PC-3 (cell line): ENCODE measurements at regions of chr17 and their contacts with region 1.

Region 1: GRCh38 chr17:9575381-9576101 is at the start of gene STX8:
- DNase-seq: peak; percentile 74
- ATAC-seq: peak; percentile 92
- H3K4me3 ChIP-seq: peak within 1 kb of the TSS; percentile 85
- H3K27ac ChIP-seq: no peak within 1 kb of the TSS
- H3K4me1 ChIP-seq: 0 out of 2 replicates have a peak, but pooled peaks cover 6% of the 10 kb centered on the region
- H3K27me3 ChIP-seq: no peaks in the 10 kb centered on the region
- CTCF ChIP-seq: no peak
- total RNA-seq, gene STX8: 33.6 and 57.4 TPM in 2 replicates

Region 2: DNA sequence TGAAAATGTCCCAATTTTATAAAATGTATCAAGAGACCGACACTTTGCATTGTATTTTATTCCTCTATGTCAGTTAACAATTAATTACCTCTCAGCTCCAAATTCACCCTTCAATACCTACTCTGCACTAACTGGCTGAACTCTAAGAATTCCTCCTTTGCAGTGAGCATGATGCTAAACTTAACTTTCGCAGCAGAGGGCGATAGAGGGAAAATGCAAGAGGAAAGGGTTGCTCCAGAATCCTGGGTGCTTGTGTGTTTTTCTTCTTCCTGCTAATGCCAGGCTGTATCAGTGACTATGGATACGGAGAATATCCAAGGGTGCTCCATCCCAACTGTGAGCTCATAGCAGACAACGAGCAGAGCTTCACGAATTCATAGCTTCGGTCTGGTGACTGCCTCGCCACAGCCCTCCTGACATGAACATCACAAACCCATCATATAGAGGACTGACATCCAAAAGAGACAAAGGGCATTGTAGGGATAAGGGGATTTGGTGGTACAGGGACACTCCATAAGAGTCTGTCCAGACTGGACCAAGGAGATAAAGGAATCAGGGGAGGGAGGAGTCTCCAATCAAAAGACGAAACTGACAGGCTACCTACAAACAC is 172.8 kb before region 1 on chr17:
- CTCF ChIA-PET with region 1: no interaction called
- POLR2A ChIA-PET with region 1: no interaction called
- intact Hi-C with region 1: no loop called
- DNase-seq: peak; percentile 55
- ATAC-seq: peak; percentile 49
- H3K4me3 ChIP-seq: no peak overlapping the region
- H3K27ac ChIP-seq: no peak overlapping the region
- H3K4me1 ChIP-seq: no peaks in the 10 kb centered on the region
- H3K27me3 ChIP-seq: no peaks in the 10 kb centered on the region
- CTCF ChIP-seq: peak; percentile 66

Region 3: DNA sequence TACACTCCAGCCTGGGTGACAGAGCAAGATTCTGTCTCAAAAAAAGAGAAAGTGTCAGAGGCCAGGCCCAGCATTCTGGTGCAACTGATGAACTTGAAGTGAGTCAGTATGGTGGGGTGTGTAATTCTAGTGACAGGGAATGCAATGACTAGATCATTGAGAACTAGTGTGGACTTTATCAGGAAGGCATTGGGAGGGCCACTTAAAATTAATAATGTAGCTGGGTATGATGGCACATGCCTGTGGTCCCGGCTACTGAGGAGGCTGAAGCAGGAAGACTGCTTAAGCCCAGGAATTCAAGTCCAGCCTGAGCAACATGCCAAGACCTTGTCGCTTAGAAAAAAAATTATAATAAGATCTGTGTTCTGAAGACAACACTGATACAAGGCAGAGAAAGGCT is 90.8 kb before region 1 on chr17:
- CTCF ChIA-PET with region 1: no interaction called
- POLR2A ChIA-PET with region 1: no interaction called
- intact Hi-C with region 1: no loop called
- DNase-seq: no peak
- ATAC-seq: no peak
- H3K4me3 ChIP-seq: no peak overlapping the region
- H3K27ac ChIP-seq: no peak overlapping the region
- H3K4me1 ChIP-seq: no peaks in the 10 kb centered on the region
- H3K27me3 ChIP-seq: no peaks in the 10 kb centered on the region
- CTCF ChIP-seq: no peak

Region 4: DNA sequence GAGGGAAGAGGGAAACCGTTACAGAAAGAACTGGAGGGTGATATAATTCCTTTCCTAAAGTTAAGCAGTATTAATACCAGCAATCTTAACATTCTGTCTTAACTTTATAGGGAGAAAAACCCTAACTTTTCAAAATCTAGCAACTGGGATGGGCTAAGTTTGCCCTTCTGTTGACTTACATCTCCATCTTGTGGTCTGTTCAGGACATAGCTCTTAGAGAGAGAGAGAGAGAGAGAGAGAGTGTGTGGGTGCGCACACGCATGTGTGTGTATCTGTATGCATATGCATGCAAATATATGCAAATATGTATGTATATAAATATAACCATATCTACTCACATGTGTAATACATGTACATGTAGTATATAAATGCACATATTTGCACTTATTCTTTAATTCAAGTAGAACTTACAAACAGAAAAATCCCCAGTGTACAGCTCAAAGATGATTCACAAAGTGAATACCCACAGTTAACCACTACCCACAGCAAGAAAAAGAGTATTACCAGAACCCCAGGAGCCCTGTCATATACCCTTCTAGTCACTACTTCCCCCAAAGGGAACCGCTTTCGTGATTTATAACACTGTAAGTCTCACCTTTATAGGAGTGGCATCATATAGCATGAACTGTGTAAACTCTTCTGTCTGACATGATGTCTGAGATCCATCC is 46.4 kb before region 1 on chr17:
- CTCF ChIA-PET with region 1: no interaction called
- POLR2A ChIA-PET with region 1: no interaction called
- intact Hi-C with region 1: no loop called
- DNase-seq: peak; percentile 27
- ATAC-seq: no peak
- H3K4me3 ChIP-seq: no peak overlapping the region
- H3K27ac ChIP-seq: no peak overlapping the region
- H3K4me1 ChIP-seq: no peaks in the 10 kb centered on the region
- H3K27me3 ChIP-seq: no peaks in the 10 kb centered on the region
- CTCF ChIP-seq: peak; percentile 62

Region 5: DNA sequence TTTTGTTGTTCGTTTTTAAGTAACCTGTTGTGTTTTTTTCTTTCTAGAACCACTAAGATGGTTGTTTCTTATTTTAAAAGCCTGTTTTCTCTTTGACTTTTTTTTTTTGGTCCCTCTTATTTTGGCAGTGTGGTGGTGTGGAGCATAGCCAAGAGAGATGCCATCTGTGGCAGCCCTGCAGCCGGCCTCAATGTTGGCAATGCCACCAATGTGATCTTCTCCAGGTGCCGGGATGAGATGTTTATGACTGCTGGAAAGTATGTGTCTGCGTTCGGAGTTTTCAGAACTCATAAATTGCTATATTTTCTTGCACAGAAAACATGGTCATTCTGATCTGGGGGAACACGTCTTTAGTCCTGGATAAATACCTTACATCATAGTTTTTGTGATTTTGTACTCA is 18.5 kb after region 1 on chr17:
- CTCF ChIA-PET with region 1: interaction called, 13 read pairs
- POLR2A ChIA-PET with region 1: interaction called, 6 read pairs
- intact Hi-C with region 1: no loop called
- DNase-seq: no peak
- ATAC-seq: no peak
- H3K4me3 ChIP-seq: no peak overlapping the region
- H3K27ac ChIP-seq: no peak overlapping the region
- H3K4me1 ChIP-seq: no peaks in the 10 kb centered on the region
- H3K27me3 ChIP-seq: no peaks in the 10 kb centered on the region
- CTCF ChIP-seq: no peak

Region 6: DNA sequence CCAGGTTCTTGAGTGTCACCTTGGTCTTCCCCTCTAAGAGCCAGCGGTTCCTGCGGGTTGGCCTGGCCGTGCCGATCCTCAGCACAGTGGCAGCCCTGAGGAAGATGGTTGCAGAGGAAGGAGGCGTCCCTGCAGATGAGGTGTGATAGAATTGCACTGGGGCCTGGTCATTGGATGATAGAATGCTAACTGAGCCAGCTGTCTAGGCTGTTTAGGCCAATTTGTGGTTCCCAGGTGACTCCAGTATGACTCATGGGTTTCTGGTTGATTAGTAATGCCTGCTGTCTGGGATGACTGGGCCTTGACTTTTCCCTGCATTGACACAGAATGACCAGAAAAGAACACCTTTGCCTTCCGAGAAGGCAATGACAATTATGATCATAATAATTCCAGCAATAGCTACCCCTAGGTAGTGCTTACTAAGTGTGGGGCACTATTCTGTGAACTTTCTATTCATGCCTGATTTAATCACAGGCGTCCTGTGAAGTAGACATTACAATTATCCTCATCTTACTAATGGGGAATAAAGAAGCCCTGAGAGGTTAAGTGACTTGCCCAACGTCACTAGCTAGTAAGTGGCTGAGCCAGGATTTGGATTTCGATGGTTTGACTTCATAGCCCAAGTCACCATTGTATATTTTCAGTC is 101.3 kb after region 1 on chr17:
- CTCF ChIA-PET with region 1: no interaction called
- POLR2A ChIA-PET with region 1: no interaction called
- intact Hi-C with region 1: loop called (anchors 1 kb)
- DNase-seq: peak; percentile 94
- ATAC-seq: peak; percentile 96
- H3K4me3 ChIP-seq: peak overlapping the region; percentile 26; the same call in 1 of the 2 replicates
- H3K27ac ChIP-seq: peak overlapping the region; percentile 94
- H3K4me1 ChIP-seq: peaks cover 19% of the 10 kb centered on the region
- H3K27me3 ChIP-seq: no peaks in the 10 kb centered on the region
- CTCF ChIP-seq: no peak

Region 7: DNA sequence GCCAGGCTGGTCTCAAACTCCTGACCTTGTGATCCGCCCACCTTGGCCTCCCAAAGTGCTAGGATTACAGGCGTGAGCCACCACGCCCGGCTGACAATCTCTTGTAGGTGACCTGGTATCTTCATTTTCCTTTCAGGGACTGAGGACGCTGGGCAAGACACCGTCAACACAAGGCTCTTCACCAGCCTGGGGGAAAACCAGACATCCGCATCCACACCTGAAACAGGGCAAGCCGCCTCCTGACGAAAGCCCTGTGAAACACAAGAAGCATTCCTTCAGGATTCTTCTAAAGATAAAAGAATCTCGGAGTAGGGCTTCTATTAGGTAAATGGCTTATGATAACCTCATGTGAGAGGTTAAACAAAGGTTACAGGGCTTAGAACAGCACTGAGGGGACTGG is 167.6 kb after region 1 on chr17:
- CTCF ChIA-PET with region 1: no interaction called
- POLR2A ChIA-PET with region 1: no interaction called
- intact Hi-C with region 1: loop called (anchors 10 kb)
- DNase-seq: no peak
- ATAC-seq: no peak
- H3K4me3 ChIP-seq: no peak overlapping the region
- H3K27ac ChIP-seq: no peak overlapping the region
- H3K4me1 ChIP-seq: no peaks in the 10 kb centered on the region
- H3K27me3 ChIP-seq: no peaks in the 10 kb centered on the region
- CTCF ChIP-seq: no peak

Region 8: GRCh38 chr17:10772425-10773380 is 1197.2 kb after region 1 on chr17:
- CTCF ChIA-PET with region 1: no interaction called
- POLR2A ChIA-PET with region 1: no interaction called
- intact Hi-C with region 1: no loop called
- DNase-seq: peak; percentile 83
- ATAC-seq: peak; percentile 20; the same call in 1 of the 2 replicates
- H3K4me3 ChIP-seq: no peak overlapping the region
- H3K27ac ChIP-seq: no peak overlapping the region
- H3K4me1 ChIP-seq: no peaks in the 10 kb centered on the region
- H3K27me3 ChIP-seq: no peaks in the 10 kb centered on the region
- CTCF ChIP-seq: peak; percentile 80